Psoas muscle (tissue), 8 donors: ENCODE measurements at regions of chr5 and their contacts with region 1.

Region 1: DNA sequence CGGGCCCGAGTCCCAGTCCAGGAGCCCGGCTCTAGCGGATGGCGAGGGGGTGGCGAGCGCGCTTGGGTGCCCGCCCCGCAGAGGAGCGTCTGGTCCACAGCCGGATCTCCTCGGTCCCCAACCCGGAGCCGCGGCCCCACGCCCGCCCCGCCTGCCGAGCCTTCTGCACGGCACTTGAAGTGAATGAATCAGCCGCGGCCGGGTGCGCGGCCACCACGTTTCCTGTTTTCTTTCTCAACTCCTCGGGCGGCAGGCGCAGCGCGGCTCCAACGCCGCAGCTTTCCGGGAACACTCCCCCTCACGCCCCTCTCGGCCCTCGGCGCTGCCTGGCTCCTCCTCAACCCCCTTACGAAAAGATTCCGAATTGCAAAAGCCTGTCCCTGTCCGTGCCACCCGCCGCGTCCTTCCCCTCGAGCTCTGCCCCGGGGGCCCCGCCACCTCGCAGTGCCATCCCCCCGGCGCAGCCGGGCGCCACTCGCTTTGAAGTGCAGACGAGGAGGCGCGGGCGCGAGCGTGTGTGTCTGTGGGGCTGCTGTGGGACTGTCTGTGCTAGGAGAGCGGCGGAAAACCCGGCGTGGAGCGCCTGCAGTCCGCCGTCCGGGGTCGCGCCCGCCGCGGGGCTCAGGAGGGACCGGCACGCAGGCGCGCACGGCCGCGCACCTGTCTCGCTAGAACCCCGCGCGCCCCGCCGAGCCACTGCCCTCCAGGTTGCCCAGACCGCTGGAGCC is 456.6 kb downstream of the RAB3C start:
- DNase-seq: peak; percentile 92 to 93
- ATAC-seq: peak; percentile 66 to 78 (median 69)
- H3K4me3 ChIP-seq: peak overlapping the region; percentile 87
- H3K27ac ChIP-seq: peak overlapping the region; percentile 94
- H3K4me1 ChIP-seq: peaks cover 49% of the 10 kb centered on the region
- H3K27me3 ChIP-seq: no peaks in the 10 kb centered on the region
- CTCF ChIP-seq: no peak

Region 2: GRCh38 chr5:59079622-59080620 is 40.5 kb after region 1 on chr5:
- intact Hi-C with region 1: loop called in 1 of 2 experiments (anchors 5 kb)
- DNase-seq: no peak
- ATAC-seq: peak; percentile 88 to 96 (median 94)
- H3K4me3 ChIP-seq: no peak overlapping the region
- H3K27ac ChIP-seq: peak overlapping the region; percentile 73
- H3K4me1 ChIP-seq: peaks cover 36% of the 10 kb centered on the region
- H3K27me3 ChIP-seq: no peaks in the 10 kb centered on the region
- CTCF ChIP-seq: no peak

Region 3: DNA sequence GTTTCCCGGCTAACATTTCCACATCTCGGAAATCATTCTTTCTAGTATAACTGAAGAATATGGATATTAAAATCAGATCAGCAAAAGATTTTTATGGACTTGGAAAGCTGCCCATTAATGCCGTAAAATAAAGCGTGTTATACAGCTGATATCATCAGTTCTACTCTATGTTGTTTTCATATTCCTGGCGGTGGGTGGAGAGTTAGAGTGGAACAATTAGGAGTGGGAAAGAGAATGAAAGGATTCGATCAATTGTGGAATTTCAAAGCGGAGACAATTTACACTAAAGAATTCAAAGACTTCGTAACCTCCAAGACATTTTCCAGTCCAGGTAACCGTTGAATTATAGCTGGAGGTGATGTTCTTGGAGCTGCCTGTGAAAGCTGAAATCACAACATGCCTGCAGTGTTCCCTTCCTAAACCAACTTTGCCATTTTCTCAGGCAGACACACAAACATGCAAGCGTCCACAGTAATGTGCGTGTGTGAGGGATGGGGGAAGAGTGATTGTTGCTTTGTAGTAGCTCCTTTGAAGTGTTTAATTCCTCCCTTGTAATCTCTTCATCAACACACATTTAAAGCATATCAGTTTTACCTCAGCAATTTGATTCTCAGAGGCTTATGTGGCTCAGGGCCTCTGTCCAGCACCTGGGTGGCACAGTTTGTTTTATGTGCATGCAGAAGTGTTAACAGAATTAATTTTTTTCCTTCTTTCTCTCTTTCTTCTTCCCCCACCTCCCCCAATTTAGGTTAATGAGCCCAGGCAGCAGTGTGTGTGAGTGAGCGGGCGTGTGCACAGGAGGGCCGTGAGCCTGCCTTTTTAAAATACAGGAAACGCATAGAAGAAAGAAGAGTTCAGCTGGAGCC is 87.5 kb after region 1 on chr5:
- intact Hi-C with region 1: loop called (anchors 1 to 5 kb)
- DNase-seq: no peak
- ATAC-seq: peak; percentile 10 to 40 (median 28)
- H3K4me3 ChIP-seq: peak overlapping the region; percentile 56
- H3K27ac ChIP-seq: peak overlapping the region; percentile 84
- H3K4me1 ChIP-seq: peaks cover 68% of the 10 kb centered on the region
- H3K27me3 ChIP-seq: no peaks in the 10 kb centered on the region
- CTCF ChIP-seq: no peak

Region 4: GRCh38 chr5:59174248-59174844 is 134.9 kb after region 1 on chr5:
- intact Hi-C with region 1: loop called (anchors 5 kb)
- DNase-seq: no peak
- ATAC-seq: peak; percentile 34 to 64 (median 52)
- H3K4me3 ChIP-seq: no peak overlapping the region
- H3K27ac ChIP-seq: peak overlapping the region; percentile 12
- H3K4me1 ChIP-seq: peaks cover 31% of the 10 kb centered on the region
- H3K27me3 ChIP-seq: no peaks in the 10 kb centered on the region
- CTCF ChIP-seq: peak; percentile 79

Region 5: DNA sequence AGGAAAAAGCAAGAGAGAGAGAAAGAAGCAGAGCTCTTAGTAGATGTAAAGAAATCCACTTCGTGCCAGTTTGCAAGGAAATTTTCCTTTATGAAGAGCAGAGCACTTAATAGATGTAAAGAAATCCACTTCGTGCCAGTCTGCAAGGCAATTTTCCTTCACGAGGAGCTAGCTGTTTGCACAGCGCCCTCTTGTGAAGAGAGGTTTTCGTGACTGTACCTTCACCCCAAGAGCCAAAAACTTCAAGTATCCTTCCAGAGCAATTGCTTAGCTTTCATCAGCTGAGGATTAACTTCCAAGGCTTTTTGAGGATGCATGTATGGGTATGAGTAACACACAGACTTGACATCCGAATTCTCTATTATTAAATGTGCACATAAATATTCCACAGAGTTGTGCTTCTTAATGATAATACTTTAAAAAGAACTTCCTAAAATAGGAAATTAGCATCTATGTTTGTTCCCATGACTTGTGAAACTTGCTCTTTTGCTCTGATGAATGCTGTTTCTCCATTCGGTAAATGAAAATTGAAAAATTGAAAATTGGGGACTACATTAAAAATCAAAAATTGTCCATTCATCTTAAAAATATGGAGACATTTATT is 328.4 kb after region 1 on chr5:
- intact Hi-C with region 1: loop called in 1 of 2 experiments (anchors 5 kb)
- DNase-seq: peak; percentile 35 to 54
- ATAC-seq: peak; percentile 60 to 77 (median 66)
- H3K4me3 ChIP-seq: no peak overlapping the region
- H3K27ac ChIP-seq: peak overlapping the region; percentile 95
- H3K4me1 ChIP-seq: peaks cover 45% of the 10 kb centered on the region
- H3K27me3 ChIP-seq: no peaks in the 10 kb centered on the region
- CTCF ChIP-seq: peak; percentile 82